Activated CD8-positive, alpha-beta T cell treated with anti-CD3 and anti-CD28 coated beads, Interleukin-2, amount 10 ng/mL, durations not matched to agents 7 days and 5 days (primary cell): ENCODE measurements at regions of chr20 and their contacts with region 1.

Region 1: GRCh38 chr20:47487175-47487917 is 14.3 kb upstream of the NCOA3 start:
- DNase-seq: peak; percentile 82
- ATAC-seq: peak; percentile 89
- H3K4me3 Mint-ChIP-seq: peak overlapping the region; percentile 69
- H3K27ac Mint-ChIP-seq: peak overlapping the region; percentile 96
- H3K4me1 Mint-ChIP-seq: peaks cover 61% of the 10 kb centered on the region
- H3K27me3 Mint-ChIP-seq: no peaks in the 10 kb centered on the region

Region 2: DNA sequence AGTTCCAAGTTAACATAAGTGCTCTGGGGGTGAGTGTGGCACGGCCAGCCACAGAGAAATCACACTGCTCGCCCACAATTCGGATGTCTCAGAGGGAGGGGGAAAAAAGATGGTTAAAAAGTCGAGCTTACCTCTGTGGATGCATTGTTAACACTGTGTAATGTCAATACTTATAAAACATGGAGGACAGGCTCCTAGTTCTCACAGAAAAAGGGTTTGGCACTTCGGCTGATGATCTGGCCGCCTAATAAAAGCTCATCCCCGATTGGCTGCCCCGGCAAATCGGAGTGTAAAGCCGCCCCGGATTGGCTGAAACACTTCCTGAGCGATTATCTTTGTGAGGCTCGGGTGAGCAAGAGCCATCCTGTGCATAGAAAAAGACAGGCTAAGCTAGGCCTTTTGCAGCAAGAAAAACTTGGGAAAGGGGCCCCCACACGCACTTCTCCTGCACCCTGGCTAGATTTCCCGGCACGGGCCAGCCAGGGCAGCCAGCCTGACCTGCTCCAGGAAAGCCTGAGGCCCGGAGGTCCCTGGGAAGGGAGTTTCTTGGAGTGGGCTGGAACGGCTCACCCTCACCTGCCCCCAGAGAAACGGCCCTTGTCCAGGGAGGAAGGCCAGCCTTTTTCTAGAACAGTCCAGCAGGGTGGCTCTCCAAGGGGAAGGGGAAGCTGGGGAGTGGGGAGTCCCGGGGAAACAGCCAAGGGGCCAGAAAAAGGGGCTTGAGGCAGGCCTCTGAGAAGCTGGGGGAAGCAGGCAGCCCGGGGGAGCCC is 130.6 kb before region 1 on chr20 and contains the start of gene ZMYND8:
- CTCF ChIA-PET with region 1: interaction called, 5 read pairs
- POLR2A ChIA-PET with region 1: interaction called, 14 read pairs
- DNase-seq: peak; percentile 96
- ATAC-seq: peak; percentile 83
- H3K4me3 Mint-ChIP-seq: peak within 1 kb of the TSS; percentile 84
- H3K27ac Mint-ChIP-seq: peak within 1 kb of the TSS; percentile 97
- H3K4me1 Mint-ChIP-seq: peaks cover 48% of the 10 kb centered on the region
- H3K27me3 Mint-ChIP-seq: no peaks in the 10 kb centered on the region
- total RNA-seq, gene ZMYND8: 44.3 to 44.7 TPM